Sciatic nerve (tissue), 2 donors: ENCODE measurements at regions of chr3 and their contacts with region 1.

Region 1: DNA sequence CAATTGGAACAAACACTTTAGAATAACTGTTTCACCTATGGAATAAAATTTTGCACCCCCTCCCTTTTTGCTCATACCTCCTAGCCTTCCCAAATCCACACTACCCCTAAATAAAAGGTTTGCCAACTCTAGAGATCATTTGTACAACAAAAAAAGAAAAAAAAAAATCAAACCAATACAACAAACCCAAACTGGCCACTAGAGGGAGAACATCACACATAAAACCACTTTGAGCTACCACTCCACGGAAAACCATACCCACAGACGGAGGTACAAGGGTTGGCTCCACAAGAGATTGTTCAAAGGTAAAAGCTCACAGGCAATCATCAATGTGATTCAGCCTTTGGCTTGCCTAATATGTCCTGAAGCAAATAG is 47.6 kb downstream of the SETMAR start:
- DNase-seq: no peak
- ATAC-seq: peak; percentile 92

Region 2: GRCh38 chr3:4322635-4323034 is 28.1 kb before region 1 on chr3:
- intact Hi-C with region 1: no loop called
- DNase-seq: no peak
- ATAC-seq: no peak

Region 3: GRCh38 chr3:4633078-4634004 is 282.6 kb after region 1 on chr3:
- intact Hi-C with region 1: loop called (anchors 5 kb)
- DNase-seq: no peak
- ATAC-seq: peak; percentile 56